HEK293T (cell line): ENCODE measurements at regions of chr14 and their contacts with region 1.

Region 1: DNA sequence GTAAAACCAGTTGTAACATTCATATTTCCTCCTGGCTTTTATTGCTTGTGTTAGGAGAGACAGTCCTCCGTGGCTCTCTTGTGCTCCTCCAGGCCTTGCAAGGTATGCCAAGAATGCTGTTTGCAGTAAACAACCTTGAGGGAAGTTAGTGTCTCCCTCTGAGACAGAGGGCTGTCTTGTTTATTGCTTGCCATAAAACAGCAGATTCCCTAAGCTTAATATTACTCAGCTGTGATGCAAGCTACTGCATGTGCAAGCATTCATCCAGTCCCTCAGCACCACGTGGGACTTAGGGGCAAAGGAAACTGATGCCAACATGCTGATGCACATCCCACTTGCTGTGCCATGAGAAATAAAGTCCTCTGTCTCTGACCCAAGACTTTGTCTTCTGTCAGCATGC is 6.6 kb downstream of the POMT2 start:
- DNase-seq: no peak

Region 2: GRCh38 chr14:77181603-77182437 is 132.2 kb before region 1 on chr14 and contains the start of gene TMEM63C:
- CTCF ChIA-PET with region 1: no interaction called
- POLR2A ChIA-PET with region 1: no interaction called
- DNase-seq: peak; percentile 90

Region 3: GRCh38 chr14:77301103-77301502 is 12.9 kb before region 1 on chr14:
- CTCF ChIA-PET with region 1: interaction called, 134 read pairs
- POLR2A ChIA-PET with region 1: interaction called, 56 read pairs
- DNase-seq: peak; percentile 77